Adrenal gland (tissue), 19 donors: ENCODE measurements at regions of chr13 and their contacts with region 1.

Region 1: GRCh38 chr13:112638157-112638750 is 50.3 kb upstream of the TUBGCP3 start:
- DNase-seq: peak in 1 of 7 donors; percentile 31
- H3K4me3 ChIP-seq: no peak overlapping the region
- H3K27ac ChIP-seq: no peak overlapping the region
- H3K4me1 ChIP-seq: no peaks in the 10 kb centered on the region
- H3K27me3 ChIP-seq: peaks cover 16% of the 10 kb centered on the region
- CTCF ChIP-seq: no peak
- POLR2A ChIP-seq: no peak

Region 2: GRCh38 chr13:112354330-112355273 is 283.7 kb before region 1 on chr13:
- intact Hi-C with region 1: no loop called
- DNase-seq: no peak
- H3K4me3 ChIP-seq: no peak overlapping the region
- H3K27ac ChIP-seq: no peak overlapping the region
- H3K4me1 ChIP-seq: no peaks in the 10 kb centered on the region
- H3K27me3 ChIP-seq: no peaks in the 10 kb centered on the region
- CTCF ChIP-seq: no peak
- POLR2A ChIP-seq: no peak

Region 3: DNA sequence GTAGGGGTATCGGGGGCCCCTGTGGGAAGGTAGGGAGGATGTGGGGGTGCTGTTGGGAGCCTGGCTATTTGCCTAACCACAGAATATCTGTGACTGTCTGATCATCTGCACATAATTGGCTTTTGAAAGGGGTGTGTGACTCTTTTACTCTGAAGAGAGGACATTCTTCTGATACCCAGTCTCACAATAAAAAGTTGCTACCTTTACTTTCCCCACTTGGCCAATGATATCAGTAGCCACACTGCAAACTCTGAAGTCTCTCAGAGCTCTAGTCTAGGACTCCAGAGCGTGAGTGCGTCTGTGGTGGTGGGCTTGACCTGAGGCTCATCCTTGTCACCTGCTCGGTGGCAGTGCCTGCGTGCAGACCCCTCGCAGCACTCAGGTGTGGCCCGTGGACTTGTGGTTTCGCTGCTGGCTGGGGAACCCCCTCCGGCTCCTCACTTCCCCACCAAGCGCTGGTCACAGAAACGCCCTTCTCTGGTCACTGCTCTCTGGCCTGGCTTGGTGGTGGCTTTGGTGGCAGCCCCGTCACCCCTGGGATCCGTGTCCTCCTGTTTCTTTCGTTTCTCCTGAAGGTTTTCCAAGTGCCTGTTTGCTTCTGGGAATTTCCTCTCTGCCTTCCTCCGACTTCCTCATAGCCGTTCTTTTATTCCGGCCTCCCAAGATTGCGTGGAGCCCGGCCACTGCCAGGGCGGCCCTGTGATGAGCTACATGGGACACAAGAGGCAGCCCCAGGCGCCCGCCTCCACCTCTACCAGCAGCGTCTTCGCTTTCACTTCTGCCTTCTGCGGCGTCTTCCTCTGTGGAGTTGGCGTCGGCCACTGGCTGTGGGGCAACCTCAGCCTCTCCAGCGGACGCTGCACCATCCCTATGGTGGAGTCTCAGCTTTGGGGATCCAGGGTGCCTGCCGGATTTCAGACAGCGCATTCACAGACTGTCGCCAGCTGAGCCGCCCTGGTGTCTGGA is 129.5 kb after region 1 on chr13:
- intact Hi-C with region 1: no loop called
- DNase-seq: peak in 5 of 7 donors; percentile 30 to 60 (median 51)
- H3K4me3 ChIP-seq: no peak overlapping the region
- H3K27ac ChIP-seq: peak overlapping the region in 1 of 5 donors; percentile 11
- H3K4me1 ChIP-seq: peaks cover 14 to 15% of the 10 kb centered on the region in 2 donors
- H3K27me3 ChIP-seq: no peaks in the 10 kb centered on the region
- CTCF ChIP-seq: no peak
- POLR2A ChIP-seq: no peak

Region 4: DNA sequence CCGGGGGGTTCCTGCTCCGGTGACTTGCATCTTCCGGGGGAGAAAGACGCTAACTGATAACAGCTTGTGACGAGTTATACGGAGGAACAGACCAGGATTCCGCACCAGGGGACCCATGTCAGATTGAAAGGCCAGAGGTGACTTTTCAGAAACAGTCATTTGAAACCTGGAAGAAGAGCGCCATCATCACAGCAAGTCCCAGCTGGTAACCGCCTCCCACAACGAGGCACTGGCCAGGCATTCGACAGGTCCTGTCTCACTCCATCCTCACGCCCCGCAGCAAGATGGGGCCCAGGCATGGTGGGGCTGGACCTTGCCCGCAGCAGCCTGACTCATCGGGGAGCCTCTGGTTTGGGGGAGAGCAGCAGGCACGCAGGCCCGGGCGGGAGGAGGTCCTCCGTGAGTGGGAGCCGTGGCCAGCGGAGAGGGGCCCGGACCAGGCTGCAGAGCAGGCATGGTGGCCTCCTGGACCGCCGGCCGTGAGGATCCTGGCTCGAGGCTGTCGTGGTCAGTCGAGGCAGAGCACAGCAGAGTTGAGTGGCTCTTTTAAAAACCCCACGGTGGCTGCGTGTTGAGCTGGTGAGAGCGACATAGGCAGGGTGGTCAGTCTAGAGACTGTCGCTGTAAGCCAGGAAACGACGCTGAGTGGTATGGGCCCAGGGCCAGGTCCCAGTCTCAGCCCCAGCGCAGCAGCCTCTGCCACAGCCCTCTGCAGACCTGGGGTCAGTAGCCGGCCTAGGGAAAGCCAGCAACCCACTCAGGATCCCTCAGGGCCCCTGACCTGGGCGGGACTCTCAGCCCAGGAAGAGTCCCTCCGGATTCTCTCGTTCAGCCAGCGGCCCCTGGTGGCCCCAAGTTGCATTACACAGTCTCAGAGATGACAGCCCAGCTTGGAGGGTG is 235.8 kb after region 1 on chr13:
- intact Hi-C with region 1: loop called (anchors 2 to 5 kb)
- DNase-seq: peak; percentile 64 to 90 (median 81)
- H3K4me3 ChIP-seq: no peak overlapping the region
- H3K27ac ChIP-seq: peak overlapping the region in 1 of 5 donors; percentile 38
- H3K4me1 ChIP-seq: peaks cover 0 to 5% of the 10 kb centered on the region in 2 donors
- H3K27me3 ChIP-seq: no peaks in the 10 kb centered on the region
- CTCF ChIP-seq: peak; percentile 90 to 95 (median 94)
- POLR2A ChIP-seq: no peak